Panc1 (cell line): ENCODE measurements at regions of chr1 and their contacts with region 1.

Region 1: GRCh38 chr1:166197141-166197540 is 30.3 kb upstream of the FAM78B start:
- DNase-seq: no peak
- ATAC-seq: no peak
- H3K4me3 ChIP-seq: no peak overlapping the region
- H3K27ac ChIP-seq: no peak overlapping the region
- H3K4me1 ChIP-seq: no peaks in the 10 kb centered on the region
- H3K27me3 ChIP-seq: no peaks in the 10 kb centered on the region; the same call in 1 of the 2 replicates
- CTCF ChIP-seq: no peak

Region 2: GRCh38 chr1:166032572-166033371 is 164.4 kb before region 1 on chr1:
- CTCF ChIA-PET with region 1: no interaction called
- POLR2A ChIA-PET with region 1: interaction called, 14 read pairs
- in situ Hi-C with region 1: no loop called
- intact Hi-C with region 1: no loop called
- DNase-seq: no peak
- ATAC-seq: no peak
- H3K4me3 ChIP-seq: no peak overlapping the region
- H3K27ac ChIP-seq: no peak overlapping the region
- H3K4me1 ChIP-seq: no peaks in the 10 kb centered on the region
- H3K27me3 ChIP-seq: no peaks in the 10 kb centered on the region
- CTCF ChIP-seq: no peak

Region 3: GRCh38 chr1:166064313-166064926 is 132.7 kb before region 1 on chr1:
- CTCF ChIA-PET with region 1: no interaction called
- POLR2A ChIA-PET with region 1: no interaction called
- in situ Hi-C with region 1: no loop called
- intact Hi-C with region 1: no loop called
- DNase-seq: no peak
- ATAC-seq: no peak
- H3K4me3 ChIP-seq: no peak overlapping the region
- H3K27ac ChIP-seq: no peak overlapping the region
- H3K4me1 ChIP-seq: no peaks in the 10 kb centered on the region
- H3K27me3 ChIP-seq: 0 out of 2 replicates have a peak, but pooled peaks cover 2% of the 10 kb centered on the region
- CTCF ChIP-seq: no peak